ENCODE measurements at regions of chr15 and their contacts with region 1.

Region 1: DNA sequence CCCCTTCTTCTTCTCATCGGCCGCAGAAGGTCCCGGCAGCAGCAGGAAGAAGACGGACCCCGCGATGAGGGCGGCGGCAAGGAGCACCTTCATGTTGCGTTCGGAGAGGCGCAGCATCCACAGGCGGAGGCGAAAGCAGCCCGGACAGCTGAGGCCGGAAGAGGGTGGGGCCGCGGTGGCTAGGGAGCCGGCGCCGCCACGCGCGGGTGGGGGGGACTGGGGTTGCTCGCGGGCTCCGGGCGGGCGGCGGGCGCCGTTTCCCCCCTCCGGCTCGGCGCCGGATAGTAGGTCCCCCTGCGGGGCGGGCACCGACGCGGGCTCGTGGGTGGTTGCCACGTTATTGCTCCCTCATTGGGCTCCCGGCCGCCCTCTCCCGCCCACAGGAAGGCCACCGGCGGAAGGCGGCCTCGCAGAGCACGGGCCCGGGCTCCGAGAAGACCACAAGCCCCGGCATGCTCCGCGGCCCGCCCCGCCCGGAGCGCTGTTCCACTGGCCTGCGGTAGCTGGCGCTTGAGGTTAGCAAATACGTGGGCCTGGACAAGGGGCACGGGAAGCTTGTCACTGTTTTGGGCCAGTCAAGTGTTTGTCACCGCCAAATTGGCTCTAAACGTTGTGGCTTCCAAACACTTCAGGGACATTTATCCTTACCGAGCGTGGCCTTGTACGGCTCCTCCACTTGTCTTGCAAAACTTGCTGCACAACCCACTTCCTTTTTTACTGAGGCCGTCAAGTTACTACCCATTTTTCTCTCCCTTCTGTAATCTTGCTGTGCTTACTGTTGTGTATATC is at the start of gene PPIB:
- DNase-seq: peak; percentile 89 to 98 (median 96)
- ATAC-seq: peak; percentile 97
- H3K4me3 ChIP-seq: peak within 1 kb of the TSS; percentile 76
- H3K4me3 Mint-ChIP-seq: peak within 1 kb of the TSS; percentile 80 to 97 (median 90)
- H3K27ac ChIP-seq: peak within 1 kb of the TSS; percentile 97
- H3K27ac Mint-ChIP-seq: peak within 1 kb of the TSS; percentile 83 to 97 (median 93)
- H3K4me1 ChIP-seq: peaks cover 17 to 29% of the 10 kb centered on the region in 2 donors
- H3K4me1 Mint-ChIP-seq: peaks cover 30 to 51% (median 46%) of the 10 kb centered on the region in 7 donors
- H3K27me3 ChIP-seq: no peaks in the 10 kb centered on the region
- H3K27me3 Mint-ChIP-seq: peaks cover 0 to 2% (median 0%) of the 10 kb centered on the region in 5 donors
- total RNA-seq, gene PPIB: 160 to 530 (median 184) TPM

Region 2: GRCh38 chr15:64197425-64197824 is 34.4 kb after region 1 on chr15:
- CTCF ChIA-PET with region 1: no interaction called
- POLR2A ChIA-PET with region 1: no interaction called
- intact Hi-C with region 1: no loop called
- DNase-seq: no peak
- ATAC-seq: no peak
- H3K4me3 ChIP-seq: no peak overlapping the region
- H3K4me3 Mint-ChIP-seq: no peak overlapping the region
- H3K27ac ChIP-seq: no peak overlapping the region
- H3K27ac Mint-ChIP-seq: no peak overlapping the region
- H3K4me1 ChIP-seq: no peaks in the 10 kb centered on the region
- H3K4me1 Mint-ChIP-seq: no peaks in the 10 kb centered on the region
- H3K27me3 ChIP-seq: no peaks in the 10 kb centered on the region
- H3K27me3 Mint-ChIP-seq: no peaks in the 10 kb centered on the region

Region 3: DNA sequence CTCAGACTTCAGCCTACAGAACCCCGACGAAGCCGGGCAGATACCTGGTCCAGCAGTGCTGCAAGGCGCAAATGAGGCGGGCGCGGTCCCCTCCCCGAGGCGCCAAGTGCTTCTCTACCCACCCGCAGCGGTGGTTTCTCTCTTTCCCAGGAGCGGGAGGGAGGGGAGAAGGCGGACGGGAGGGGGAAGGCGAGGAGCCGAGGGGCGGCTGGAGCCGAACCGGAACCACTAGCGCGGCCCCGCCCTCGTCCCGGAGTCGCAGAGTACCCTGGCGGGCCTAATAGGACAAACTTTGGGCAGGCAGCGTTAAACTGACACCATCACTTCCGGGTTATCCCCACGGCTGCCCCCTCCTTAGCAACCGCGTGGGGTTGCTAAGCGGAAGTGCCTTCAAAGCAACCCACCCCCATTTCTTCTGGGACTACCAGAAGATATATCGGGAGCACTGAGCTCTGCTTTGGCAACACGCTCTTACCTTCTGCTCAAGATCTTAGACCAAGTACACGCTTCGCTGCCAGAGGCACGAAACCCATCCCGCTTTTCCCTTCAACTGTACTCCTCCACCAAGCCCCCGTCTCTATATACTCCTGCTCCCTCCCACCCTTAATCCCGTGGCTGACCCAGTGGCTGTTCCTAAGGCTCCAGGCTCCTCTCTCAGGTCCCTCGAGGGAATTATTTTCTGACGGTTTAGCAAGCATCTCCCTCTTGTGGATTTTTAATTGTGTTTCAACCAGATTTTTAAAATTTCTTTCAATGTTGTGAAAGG is 193.1 kb after region 1 on chr15 and contains the start of gene CSNK1G1:
- CTCF ChIA-PET with region 1: no interaction called
- POLR2A ChIA-PET with region 1: no interaction called
- intact Hi-C with region 1: loop called (anchors 1 kb)
- DNase-seq: peak; percentile 73 to 94 (median 89)
- ATAC-seq: peak; percentile 100
- H3K4me3 ChIP-seq: peak within 1 kb of the TSS; percentile 90
- H3K4me3 Mint-ChIP-seq: peak within 1 kb of the TSS; percentile 90 to 97 (median 92)
- H3K27ac ChIP-seq: peak within 1 kb of the TSS; percentile 73
- H3K27ac Mint-ChIP-seq: peak within 1 kb of the TSS; percentile 78 to 93 (median 92)
- H3K4me1 ChIP-seq: peaks cover 9 to 10% of the 10 kb centered on the region in 2 donors
- H3K4me1 Mint-ChIP-seq: peaks cover 14 to 22% (median 18%) of the 10 kb centered on the region in 7 donors
- H3K27me3 ChIP-seq: no peaks in the 10 kb centered on the region
- H3K27me3 Mint-ChIP-seq: no peaks in the 10 kb centered on the region
- total RNA-seq, gene CSNK1G1: 19.7 to 31.4 (median 26.5) TPM

Region 4: GRCh38 chr15:64387562-64388168 is 224.6 kb after region 1 on chr15 and contains the start of gene TRIP4:
- CTCF ChIA-PET with region 1: no interaction called
- POLR2A ChIA-PET with region 1: interaction called, 19 read pairs
- intact Hi-C with region 1: loop called (anchors 1 kb)
- DNase-seq: peak; percentile 90 to 97 (median 96)
- ATAC-seq: peak; percentile 100
- H3K4me3 ChIP-seq: peak within 1 kb of the TSS; percentile 97
- H3K4me3 Mint-ChIP-seq: peak within 1 kb of the TSS; percentile 95 to 99 (median 97)
- H3K27ac ChIP-seq: peak within 1 kb of the TSS; percentile 64
- H3K27ac Mint-ChIP-seq: peak within 1 kb of the TSS; percentile 84 to 99 (median 92)
- H3K4me1 ChIP-seq: peaks cover 8 to 10% of the 10 kb centered on the region in 2 donors
- H3K4me1 Mint-ChIP-seq: peaks cover 17 to 24% (median 19%) of the 10 kb centered on the region in 7 donors
- H3K27me3 ChIP-seq: no peaks in the 10 kb centered on the region
- H3K27me3 Mint-ChIP-seq: no peaks in the 10 kb centered on the region
- total RNA-seq, gene TRIP4: 16.5 to 29.3 (median 25.4) TPM

Region 5: DNA sequence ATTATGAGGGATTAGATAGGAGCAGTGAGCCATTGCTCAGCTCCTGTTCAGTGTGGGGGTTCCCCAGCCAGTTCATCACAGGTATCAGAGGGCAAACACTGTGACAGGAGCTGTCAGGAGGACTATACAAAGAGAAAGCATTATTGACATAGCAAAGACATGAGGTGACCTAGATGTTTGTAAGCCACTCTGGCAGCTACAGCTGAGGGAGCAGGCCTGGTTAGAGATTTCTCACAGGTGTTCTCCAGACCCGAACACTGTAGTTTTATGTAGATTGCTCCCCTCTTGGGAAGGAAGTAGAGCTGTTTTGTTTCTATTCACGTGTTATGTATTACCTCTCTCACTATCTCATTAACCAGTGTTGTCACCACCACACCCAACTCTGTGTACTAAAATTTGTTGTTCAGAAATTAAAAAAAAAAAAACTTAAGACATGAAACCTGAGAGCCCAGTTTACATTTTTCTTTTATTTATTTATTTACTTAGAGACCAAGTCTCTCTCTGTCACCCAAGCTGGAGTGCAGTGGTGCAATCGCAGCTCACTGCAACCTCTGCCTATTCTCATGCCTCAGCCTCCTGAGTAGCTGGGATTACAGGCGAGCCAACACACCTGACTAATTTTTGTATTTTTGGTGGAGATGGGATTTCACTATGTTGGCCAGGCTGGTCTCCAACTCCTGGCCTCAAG is 488.7 kb after region 1 on chr15:
- CTCF ChIA-PET with region 1: no interaction called
- POLR2A ChIA-PET with region 1: no interaction called
- intact Hi-C with region 1: loop called in 1 of 2 experiments (anchors 5 kb)
- DNase-seq: peak in 7 of 9 donors; percentile 26 to 63 (median 45)
- ATAC-seq: peak; percentile 95
- H3K4me3 ChIP-seq: peak overlapping the region; percentile 8
- H3K4me3 Mint-ChIP-seq: peak overlapping the region; percentile 21 to 83 (median 64)
- H3K27ac ChIP-seq: peak overlapping the region; percentile 58
- H3K27ac Mint-ChIP-seq: peak overlapping the region; percentile 68 to 96 (median 88)
- H3K4me1 ChIP-seq: peaks cover 24 to 32% of the 10 kb centered on the region in 2 donors
- H3K4me1 Mint-ChIP-seq: peaks cover 29 to 80% (median 62%) of the 10 kb centered on the region in 7 donors
- H3K27me3 ChIP-seq: no peaks in the 10 kb centered on the region
- H3K27me3 Mint-ChIP-seq: no peaks in the 10 kb centered on the region

Region 6: DNA sequence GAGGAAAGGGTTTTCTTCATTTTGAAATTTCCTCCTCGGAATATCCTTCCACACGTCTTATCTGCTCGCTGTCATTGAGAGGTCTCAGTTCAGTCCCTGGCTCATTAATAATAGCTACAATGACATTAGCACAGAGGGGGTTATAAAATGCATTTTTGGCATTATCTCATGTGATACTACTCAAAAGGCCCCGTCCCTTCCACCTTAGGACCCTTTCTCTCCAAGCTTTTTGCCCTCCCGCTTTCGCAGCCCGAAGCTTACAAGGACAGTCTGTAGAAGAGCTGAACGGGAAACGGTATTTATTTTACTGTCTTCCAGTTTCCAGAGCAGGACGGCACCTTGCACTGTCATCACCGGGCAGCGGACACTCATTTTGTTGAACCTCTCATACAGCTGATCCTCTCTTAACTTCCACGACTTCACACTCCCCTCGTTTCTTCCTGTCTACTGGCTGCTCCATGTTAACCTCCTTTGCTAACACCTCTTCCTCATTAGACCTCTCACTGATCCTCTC is 673.0 kb after region 1 on chr15:
- CTCF ChIA-PET with region 1: no interaction called
- POLR2A ChIA-PET with region 1: no interaction called
- intact Hi-C with region 1: loop called in 1 of 2 experiments (anchors 2 kb)
- DNase-seq: no peak
- ATAC-seq: no peak
- H3K4me3 ChIP-seq: no peak overlapping the region
- H3K4me3 Mint-ChIP-seq: peak overlapping the region; percentile 16 to 80 (median 72)
- H3K27ac ChIP-seq: peak overlapping the region; percentile 38
- H3K27ac Mint-ChIP-seq: peak overlapping the region; percentile 44 to 91 (median 81)
- H3K4me1 ChIP-seq: peaks cover 37 to 43% of the 10 kb centered on the region in 2 donors
- H3K4me1 Mint-ChIP-seq: peaks cover 42 to 56% (median 52%) of the 10 kb centered on the region in 7 donors
- H3K27me3 ChIP-seq: no peaks in the 10 kb centered on the region
- H3K27me3 Mint-ChIP-seq: no peaks in the 10 kb centered on the region

Region 7: GRCh38 chr15:65133548-65134200 is 970.6 kb after region 1 on chr15 and contains the start of gene PDCD7:
- CTCF ChIA-PET with region 1: no interaction called
- POLR2A ChIA-PET with region 1: no interaction called
- intact Hi-C with region 1: loop called in 1 of 2 experiments (anchors 10 kb)
- DNase-seq: peak; percentile 52 to 89 (median 81)
- ATAC-seq: peak; percentile 95
- H3K4me3 ChIP-seq: peak within 1 kb of the TSS; percentile 81
- H3K4me3 Mint-ChIP-seq: peak within 1 kb of the TSS; percentile 88 to 100 (median 92)
- H3K27ac ChIP-seq: peak within 1 kb of the TSS; percentile 94
- H3K27ac Mint-ChIP-seq: peak within 1 kb of the TSS; percentile 90 to 98 (median 96)
- H3K4me1 ChIP-seq: peaks cover 6 to 14% of the 10 kb centered on the region in 2 donors
- H3K4me1 Mint-ChIP-seq: peaks cover 20 to 43% (median 35%) of the 10 kb centered on the region in 7 donors
- H3K27me3 ChIP-seq: no peaks in the 10 kb centered on the region
- H3K27me3 Mint-ChIP-seq: peaks cover 0 to 2% (median 0%) of the 10 kb centered on the region in 5 donors
- total RNA-seq, gene PDCD7: 23.0 to 38.6 (median 36.9) TPM